H1 (cell line): ENCODE measurements at regions of chr1 and their contacts with region 1.

Region 1: GRCh38 chr1:1318131-1318652 is 6.3 kb downstream of the INTS11 start:
- DNase-seq: no peak
- H3K4me3 ChIP-seq: no peak overlapping the region
- H3K27ac ChIP-seq: no peak overlapping the region
- H3K4me1 ChIP-seq: peaks cover 0 to 15% (median 4%) of the 10 kb centered on the region in 4 experiments; a peak in 6 of 7 replicates
- H3K27me3 ChIP-seq: no peaks in the 10 kb centered on the region
- CTCF ChIP-seq: no peak
- EP300 ChIP-seq: no peak
- POLR2A ChIP-seq: no peak
- RAD21 ChIP-seq: no peak

Region 2: DNA sequence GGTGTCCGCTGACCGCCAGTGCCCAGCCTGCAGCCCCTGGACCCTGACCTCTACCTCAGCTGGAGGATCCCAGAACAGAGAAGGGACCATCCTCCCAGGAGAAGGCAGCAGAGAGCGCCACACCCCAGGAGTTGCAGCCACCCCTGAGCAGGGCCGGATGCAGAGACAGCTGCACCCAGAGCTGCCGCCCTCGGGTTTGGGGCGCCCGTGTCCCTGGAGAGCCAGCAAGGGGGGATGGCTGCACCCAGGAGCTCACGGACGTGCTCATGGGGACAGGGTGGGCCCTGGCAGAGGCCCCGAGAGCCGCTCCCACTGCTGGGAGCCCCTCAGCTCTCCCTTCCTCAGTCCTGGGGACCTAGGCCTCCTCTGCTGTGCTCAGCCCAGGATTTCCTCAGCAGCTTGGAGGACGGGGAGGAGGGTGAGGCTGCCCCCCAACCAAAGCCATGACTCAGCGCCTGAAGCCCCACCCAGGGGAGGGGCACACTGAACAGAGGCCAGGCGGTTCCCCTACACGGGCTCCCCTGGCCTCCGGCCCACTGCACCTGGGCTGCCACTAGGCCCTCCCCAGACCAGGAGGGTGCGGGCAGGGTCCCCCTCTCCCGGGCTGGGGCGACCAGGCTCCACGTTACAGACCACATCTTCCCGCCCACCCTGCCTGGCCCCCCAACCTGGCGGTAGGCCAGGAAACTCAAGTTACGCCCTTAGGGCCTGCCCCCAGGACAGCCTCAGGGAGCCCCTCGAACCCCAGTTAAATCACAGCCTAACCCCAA is 12.7 kb before region 1 on chr1:
- CTCF ChIA-PET with region 1: interaction called, 6 read pairs
- POLR2A ChIA-PET with region 1: interaction called, 20 read pairs
- DNase-seq: no peak
- H3K4me3 ChIP-seq: no peak overlapping the region
- H3K27ac ChIP-seq: peak overlapping the region; percentile 38; the same call in 1 of the 2 replicates
- H3K4me1 ChIP-seq: peaks cover 0 to 40% (median 31%) of the 10 kb centered on the region in 4 experiments; a peak in 6 of 7 replicates
- H3K27me3 ChIP-seq: peaks cover 0 to 4% (median 1%) of the 10 kb centered on the region in 4 experiments; a peak in 1 of 7 replicates
- CTCF ChIP-seq: peak in 1 of 3 experiments; percentile 9; a peak in 1 of 4 replicates
- EP300 ChIP-seq: no peak
- POLR2A ChIP-seq: no peak
- RAD21 ChIP-seq: 0 out of 4 replicates have a peak, but pooled peaks of 1 of the 2 experiments have one; percentile 12